ENCODE measurements at regions of chr20 and their contacts with region 1.

Region 1: GRCh38 chr20:59149651-59150504 is 13.7 kb upstream of the ZNF831 start:
- DNase-seq: no peak
- H3K4me3 ChIP-seq: no peak overlapping the region
- H3K27ac ChIP-seq: peak overlapping the region in 3 of 4 donors; percentile 46 to 60 (median 54)
- H3K4me1 ChIP-seq: peaks cover 31 to 66% (median 43%) of the 10 kb centered on the region in 4 donors
- H3K27me3 ChIP-seq: no peaks in the 10 kb centered on the region
- CTCF ChIP-seq: no peak
- EP300 ChIP-seq: no peak
- POLR2A ChIP-seq: no peak

Region 2: GRCh38 chr20:58583176-58583575 is 566.7 kb before region 1 on chr20:
- intact Hi-C with region 1: no loop called
- DNase-seq: no peak
- H3K4me3 ChIP-seq: no peak overlapping the region
- H3K27ac ChIP-seq: no peak overlapping the region
- H3K4me1 ChIP-seq: peaks cover 0 to 16% (median 5%) of the 10 kb centered on the region in 4 donors
- H3K27me3 ChIP-seq: no peaks in the 10 kb centered on the region
- CTCF ChIP-seq: no peak
- EP300 ChIP-seq: no peak
- POLR2A ChIP-seq: no peak

Region 3: GRCh38 chr20:59221049-59221706 is 71.3 kb after region 1 on chr20:
- intact Hi-C with region 1: loop called (anchors 10 kb)
- DNase-seq: peak; percentile 86
- H3K4me3 ChIP-seq: no peak overlapping the region
- H3K27ac ChIP-seq: peak overlapping the region in 2 of 4 donors; percentile 15 to 54
- H3K4me1 ChIP-seq: peaks cover 10 to 25% (median 22%) of the 10 kb centered on the region in 4 donors
- H3K27me3 ChIP-seq: peaks cover 0 to 51% (median 0%) of the 10 kb centered on the region in 4 donors
- CTCF ChIP-seq: peak in 1 of 3 experiments; percentile 5
- EP300 ChIP-seq: no peak
- POLR2A ChIP-seq: no peak